CD8-positive, alpha-beta T cell (primary cell): ENCODE measurements at regions of chr2 and their contacts with region 1.

Region 1: DNA sequence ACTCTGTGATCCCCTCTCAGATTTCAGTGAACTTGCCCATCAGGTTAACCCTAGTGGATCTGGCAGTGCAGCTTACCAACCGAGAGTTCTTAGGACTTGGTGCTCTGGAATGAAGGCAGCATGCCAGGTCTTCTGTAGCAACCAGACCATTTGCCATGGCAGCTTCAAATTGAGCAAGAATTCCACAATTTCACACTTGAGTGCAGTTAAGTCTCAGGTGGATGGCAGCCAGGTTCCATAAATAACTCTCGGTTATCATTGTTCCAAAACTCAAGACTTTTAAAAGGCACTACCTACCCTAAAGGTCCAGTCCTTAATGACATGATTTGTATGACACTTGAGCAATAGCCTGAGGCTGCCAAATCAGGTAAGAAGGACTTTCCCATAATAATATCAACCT is 48.1 kb downstream of the GALNT3 start:
- DNase-seq: no peak
- ATAC-seq: no peak
- H3K4me3 ChIP-seq: no peak overlapping the region
- H3K4me3 Mint-ChIP-seq: no peak overlapping the region
- H3K27ac ChIP-seq: no peak overlapping the region
- H3K27ac Mint-ChIP-seq: no peak overlapping the region
- H3K4me1 ChIP-seq: no peaks in the 10 kb centered on the region
- H3K4me1 Mint-ChIP-seq: no peaks in the 10 kb centered on the region
- H3K27me3 ChIP-seq: no peaks in the 10 kb centered on the region
- H3K27me3 Mint-ChIP-seq: no peaks in the 10 kb centered on the region
- CTCF ChIP-seq: no peak

Region 2: GRCh38 chr2:165778653-165779451 is 32.9 kb after region 1 on chr2:
- CTCF ChIA-PET with region 1: no interaction called
- POLR2A ChIA-PET with region 1: no interaction called
- intact Hi-C with region 1: loop called in 1 of 2 experiments (anchors 1 kb)
- DNase-seq: no peak
- ATAC-seq: no peak
- H3K4me3 ChIP-seq: no peak overlapping the region
- H3K4me3 Mint-ChIP-seq: no peak overlapping the region
- H3K27ac ChIP-seq: peak overlapping the region in 1 of 2 experiments; percentile 41
- H3K27ac Mint-ChIP-seq: no peak overlapping the region
- H3K4me1 ChIP-seq: no peaks in the 10 kb centered on the region
- H3K4me1 Mint-ChIP-seq: peaks cover 6% of the 10 kb centered on the region
- H3K27me3 ChIP-seq: no peaks in the 10 kb centered on the region
- H3K27me3 Mint-ChIP-seq: no peaks in the 10 kb centered on the region
- CTCF ChIP-seq: no peak

Region 3: DNA sequence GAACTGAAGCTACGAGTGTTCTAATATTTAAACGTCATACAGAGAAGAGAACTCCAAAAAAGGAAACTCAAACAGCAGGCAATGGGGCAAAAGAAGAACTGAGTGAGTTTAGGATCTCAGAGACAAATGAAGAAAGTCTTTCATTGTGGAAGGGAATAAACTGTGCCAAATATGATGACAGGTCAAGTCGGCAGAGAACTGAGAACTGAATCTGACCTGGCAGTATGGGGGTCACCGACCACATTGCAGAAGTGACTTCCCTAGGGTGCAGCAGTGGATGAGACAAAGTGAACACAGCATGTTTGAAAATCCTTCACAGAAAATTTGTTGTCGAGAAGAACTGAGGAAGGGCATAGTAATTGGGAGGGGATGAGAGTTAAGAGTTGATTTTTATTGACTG is 151.8 kb after region 1 on chr2:
- CTCF ChIA-PET with region 1: no interaction called
- POLR2A ChIA-PET with region 1: no interaction called
- intact Hi-C with region 1: no loop called
- DNase-seq: no peak
- ATAC-seq: no peak
- H3K4me3 ChIP-seq: no peak overlapping the region
- H3K4me3 Mint-ChIP-seq: no peak overlapping the region
- H3K27ac ChIP-seq: no peak overlapping the region
- H3K27ac Mint-ChIP-seq: no peak overlapping the region
- H3K4me1 ChIP-seq: no peaks in the 10 kb centered on the region
- H3K4me1 Mint-ChIP-seq: peaks cover 2% of the 10 kb centered on the region
- H3K27me3 ChIP-seq: no peaks in the 10 kb centered on the region
- H3K27me3 Mint-ChIP-seq: no peaks in the 10 kb centered on the region
- CTCF ChIP-seq: no peak